Sciatic nerve (tissue), 2 donors: ENCODE measurements at regions of chr2 and their contacts with region 1.

Region 1: DNA sequence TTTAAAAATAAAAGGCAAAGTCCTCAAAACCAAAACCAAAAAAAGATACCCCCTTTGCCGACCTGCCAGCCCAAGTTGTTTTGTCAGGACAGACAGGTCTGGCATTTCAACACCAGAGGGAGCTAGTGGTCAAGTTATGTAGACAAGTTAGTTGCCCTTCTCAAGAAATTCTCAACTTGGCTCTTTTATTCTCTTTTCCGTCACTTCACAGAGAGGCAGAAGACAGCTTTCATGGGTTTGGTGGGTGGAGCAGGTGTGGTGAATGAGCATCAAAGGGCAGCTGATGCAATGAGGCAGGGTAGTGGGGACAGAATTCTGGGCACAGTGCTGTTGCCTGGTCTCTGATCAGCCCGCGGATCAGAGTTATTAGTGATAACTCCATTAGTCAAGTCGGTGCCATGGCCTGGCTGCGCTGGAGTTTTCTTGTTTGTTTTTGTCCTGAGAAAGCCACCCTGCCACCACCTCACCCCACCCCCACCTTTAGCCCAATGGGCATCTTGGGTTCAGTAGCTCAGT is 303.7 kb upstream of the EPAS1 start:
- DNase-seq: peak; percentile 79
- ATAC-seq: peak; percentile 79

Region 2: GRCh38 chr2:45439788-45440773 is 553.5 kb before region 1 on chr2:
- intact Hi-C with region 1: no loop called
- DNase-seq: no peak
- ATAC-seq: no peak

Region 3: GRCh38 chr2:46073540-46074018 is 80.0 kb after region 1 on chr2:
- intact Hi-C with region 1: no loop called
- DNase-seq: no peak
- ATAC-seq: no peak

Region 4: GRCh38 chr2:46601328-46601963 is 607.9 kb after region 1 on chr2:
- intact Hi-C with region 1: loop called (anchors 5 kb)
- DNase-seq: no peak
- ATAC-seq: no peak